Activated CD4-positive, alpha-beta T cell treated with anti-CD3 and anti-CD28 coated beads, Interleukin-2, amount 10 ng/mL, durations not matched to agents 24 days and 14 days (primary cell): ENCODE measurements at regions of chr14 and their contacts with region 1.

Region 1: GRCh38 chr14:69611201-69612011 is at the start of gene SUSD6:
- DNase-seq: peak; percentile 96
- H3K4me3 Mint-ChIP-seq: peak within 1 kb of the TSS; percentile 95
- H3K27ac Mint-ChIP-seq: peak within 1 kb of the TSS; percentile 97
- H3K4me1 Mint-ChIP-seq: peaks cover 65% of the 10 kb centered on the region
- H3K27me3 Mint-ChIP-seq: no peaks in the 10 kb centered on the region
- total RNA-seq, gene SUSD6: 73.4 and 78.9 TPM in 2 replicates

Region 2: GRCh38 chr14:68210729-68211299 is 1400.6 kb before region 1 on chr14:
- intact Hi-C with region 1: loop called (anchors 5 kb)
- DNase-seq: peak; percentile 86
- H3K4me3 Mint-ChIP-seq: peak overlapping the region; percentile 80
- H3K27ac Mint-ChIP-seq: peak overlapping the region; percentile 87
- H3K4me1 Mint-ChIP-seq: peaks cover 45% of the 10 kb centered on the region
- H3K27me3 Mint-ChIP-seq: no peaks in the 10 kb centered on the region

Region 3: GRCh38 chr14:69535230-69535848 is 76.1 kb before region 1 on chr14:
- intact Hi-C with region 1: no loop called
- DNase-seq: peak; percentile 44
- H3K4me3 Mint-ChIP-seq: no peak overlapping the region
- H3K27ac Mint-ChIP-seq: no peak overlapping the region
- H3K4me1 Mint-ChIP-seq: peaks cover 3% of the 10 kb centered on the region
- H3K27me3 Mint-ChIP-seq: peaks cover 50% of the 10 kb centered on the region

Region 4: DNA sequence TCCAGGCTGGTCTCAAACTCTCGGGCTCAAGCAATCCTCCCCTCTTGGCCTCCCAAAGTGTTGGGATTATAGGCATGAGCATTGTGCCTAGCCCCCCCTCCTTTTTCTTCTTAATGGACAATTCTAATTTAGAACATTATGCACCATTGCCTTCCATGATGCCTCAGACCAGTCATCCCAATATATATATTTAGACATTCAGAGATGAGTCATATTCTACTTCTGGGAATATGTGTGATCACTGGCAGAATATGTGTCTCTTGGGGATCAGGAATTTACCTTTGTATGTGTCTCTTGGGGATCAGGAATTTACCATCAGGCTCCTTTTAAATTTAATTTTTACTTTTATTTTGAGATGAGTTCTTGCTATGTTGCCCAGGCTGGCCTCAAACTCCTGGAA is 29.2 kb before region 1 on chr14:
- intact Hi-C with region 1: no loop called
- DNase-seq: no peak
- H3K4me3 Mint-ChIP-seq: no peak overlapping the region
- H3K27ac Mint-ChIP-seq: no peak overlapping the region
- H3K4me1 Mint-ChIP-seq: peaks cover 2% of the 10 kb centered on the region
- H3K27me3 Mint-ChIP-seq: peaks cover 18% of the 10 kb centered on the region

Region 5: DNA sequence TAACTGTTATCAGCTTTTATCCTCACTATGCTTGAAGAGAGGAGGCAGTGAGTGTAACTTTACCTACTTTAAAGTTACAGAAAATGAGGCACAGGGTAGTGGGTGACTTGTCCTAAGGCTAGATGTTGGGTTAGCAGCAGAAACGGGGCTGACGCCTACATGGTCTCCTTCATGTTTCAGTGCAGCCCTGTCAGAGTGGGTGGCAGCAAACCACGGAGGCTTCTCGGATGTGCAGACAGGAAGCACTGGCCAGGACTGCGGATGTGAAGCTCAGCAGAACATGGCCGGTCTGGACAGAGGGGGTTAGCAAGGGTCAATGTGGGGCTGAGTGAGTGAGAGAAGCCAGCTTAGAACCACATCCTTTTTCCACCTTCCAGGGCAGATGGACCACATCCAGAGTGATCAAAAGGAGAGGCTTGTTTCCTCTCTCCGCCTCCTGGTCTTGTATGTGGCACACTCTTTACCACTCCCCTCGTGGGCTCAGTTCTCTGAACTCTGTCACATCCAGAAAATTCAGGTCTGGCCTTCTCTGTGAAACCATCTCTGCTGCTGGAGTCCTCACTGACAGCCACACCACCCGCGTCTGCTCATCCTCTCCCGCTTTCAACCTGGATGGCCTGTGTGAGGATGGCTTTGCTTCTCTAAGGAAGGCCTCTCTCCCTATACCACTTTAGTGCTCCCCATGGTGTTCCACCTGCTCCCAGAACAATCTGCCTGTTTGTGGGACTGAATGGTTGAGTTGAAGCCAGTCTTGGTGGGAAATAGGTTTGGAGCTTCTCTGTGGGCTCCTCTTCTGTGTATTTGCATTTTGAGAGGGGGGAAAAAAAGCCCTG is 14.1 kb after region 1 on chr14:
- intact Hi-C with region 1: loop called (anchors 1 kb)
- DNase-seq: peak; percentile 93
- H3K4me3 Mint-ChIP-seq: peak overlapping the region; percentile 81
- H3K27ac Mint-ChIP-seq: peak overlapping the region; percentile 96
- H3K4me1 Mint-ChIP-seq: peaks cover 80% of the 10 kb centered on the region
- H3K27me3 Mint-ChIP-seq: no peaks in the 10 kb centered on the region

Region 6: GRCh38 chr14:69673578-69674305 is 62.3 kb after region 1 on chr14:
- intact Hi-C with region 1: loop called (anchors 1 kb)
- DNase-seq: peak; percentile 72
- H3K4me3 Mint-ChIP-seq: peak overlapping the region; percentile 80
- H3K27ac Mint-ChIP-seq: peak overlapping the region; percentile 98
- H3K4me1 Mint-ChIP-seq: peaks cover 83% of the 10 kb centered on the region
- H3K27me3 Mint-ChIP-seq: no peaks in the 10 kb centered on the region

Region 7: DNA sequence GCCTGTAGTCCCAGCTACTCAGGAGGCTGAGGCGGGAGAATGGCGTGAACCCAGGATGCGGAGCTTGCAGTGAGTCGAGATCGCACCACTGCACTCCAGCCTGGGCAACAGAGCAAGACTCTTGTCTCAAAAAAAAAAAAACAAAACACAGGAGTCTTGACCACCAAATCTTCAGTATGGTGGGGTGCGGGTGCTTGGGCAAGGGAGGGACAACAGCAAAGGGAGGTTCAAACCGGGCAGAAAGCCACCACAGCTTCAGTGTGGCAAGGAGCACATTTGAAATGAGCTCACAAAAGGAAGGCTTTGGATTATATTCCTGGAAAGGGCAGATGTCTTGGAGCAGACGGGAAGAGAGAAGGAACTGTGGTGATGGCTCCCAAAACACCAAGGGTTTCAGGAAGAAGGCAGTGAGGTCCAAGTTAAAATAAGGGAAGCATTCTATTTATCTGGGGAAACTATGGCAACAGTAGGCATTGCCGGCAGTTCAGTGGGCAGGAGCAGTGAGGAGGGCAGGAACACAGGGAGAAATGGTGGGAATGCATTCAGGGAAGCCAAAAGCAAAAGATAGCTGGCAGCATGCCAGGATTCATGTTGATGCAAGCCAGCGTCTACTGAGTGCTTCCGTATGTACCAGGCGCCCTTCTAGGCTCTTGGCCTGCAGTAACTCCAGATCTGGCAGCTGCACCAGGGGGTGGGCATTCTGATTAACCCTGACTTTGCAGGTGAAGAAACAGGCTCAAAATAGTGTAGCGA is 104.5 kb after region 1 on chr14:
- intact Hi-C with region 1: loop called (anchors 1 kb)
- DNase-seq: peak; percentile 70
- H3K4me3 Mint-ChIP-seq: peak overlapping the region; percentile 65
- H3K27ac Mint-ChIP-seq: peak overlapping the region; percentile 88
- H3K4me1 Mint-ChIP-seq: peaks cover 73% of the 10 kb centered on the region
- H3K27me3 Mint-ChIP-seq: no peaks in the 10 kb centered on the region

Region 8: DNA sequence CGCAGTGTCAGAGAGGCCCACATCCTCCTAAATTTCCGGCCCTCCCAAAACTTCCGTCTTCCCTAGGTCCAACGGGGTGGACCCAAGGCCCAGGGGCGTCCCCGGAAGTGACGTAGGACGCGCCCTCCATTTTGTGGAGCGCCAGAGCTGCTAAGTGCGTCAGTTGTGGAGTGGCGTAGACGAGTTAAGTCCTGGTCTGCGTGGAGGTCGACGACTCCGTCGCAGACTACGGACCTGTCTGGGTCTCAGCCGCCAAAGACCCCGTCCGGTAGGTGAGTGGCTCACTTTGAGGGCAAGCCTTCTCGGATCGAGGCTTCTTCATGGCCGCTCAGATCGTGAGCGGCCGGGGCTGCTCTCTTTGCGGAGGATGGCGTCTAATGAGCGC is 155.6 kb after region 1 on chr14 and contains the start of gene SRSF5:
- intact Hi-C with region 1: loop called (anchors 1 kb)
- DNase-seq: peak; percentile 99
- H3K4me3 Mint-ChIP-seq: peak within 1 kb of the TSS; percentile 99
- H3K27ac Mint-ChIP-seq: peak within 1 kb of the TSS; percentile 100
- H3K4me1 Mint-ChIP-seq: peaks cover 56% of the 10 kb centered on the region
- H3K27me3 Mint-ChIP-seq: peaks cover 5% of the 10 kb centered on the region
- total RNA-seq, gene SRSF5: 319 and 322 TPM in 2 replicates